Activated CD8-positive, alpha-beta T cell treated with anti-CD3 and anti-CD28 coated beads, Interleukin-2, amount 10 ng/mL, durations not matched to agents 7 days and 5 days (primary cell): ENCODE measurements at regions of chr17 and their contacts with region 1.

Region 1: DNA sequence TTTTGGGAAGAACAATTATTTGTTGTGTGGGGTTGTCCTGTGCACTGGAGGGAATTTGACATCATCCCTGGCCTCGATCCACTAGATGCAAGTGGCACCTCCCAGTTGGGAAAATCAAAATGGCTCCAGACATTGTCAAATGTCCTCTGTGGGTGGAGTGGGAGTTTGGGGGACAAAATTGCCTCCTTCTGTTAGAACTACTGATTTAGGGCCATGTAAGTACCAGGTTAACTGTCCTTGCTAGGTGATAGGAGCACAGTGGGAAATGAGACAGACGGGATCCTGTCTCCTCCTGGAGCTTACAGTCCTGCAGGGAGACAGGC is 56.8 kb downstream of the ARHGAP23 start:
- DNase-seq: no peak
- ATAC-seq: no peak
- H3K4me3 Mint-ChIP-seq: no peak overlapping the region
- H3K27ac Mint-ChIP-seq: no peak overlapping the region
- H3K4me1 Mint-ChIP-seq: peaks cover 5% of the 10 kb centered on the region
- H3K27me3 Mint-ChIP-seq: peaks cover 10% of the 10 kb centered on the region

Region 2: DNA sequence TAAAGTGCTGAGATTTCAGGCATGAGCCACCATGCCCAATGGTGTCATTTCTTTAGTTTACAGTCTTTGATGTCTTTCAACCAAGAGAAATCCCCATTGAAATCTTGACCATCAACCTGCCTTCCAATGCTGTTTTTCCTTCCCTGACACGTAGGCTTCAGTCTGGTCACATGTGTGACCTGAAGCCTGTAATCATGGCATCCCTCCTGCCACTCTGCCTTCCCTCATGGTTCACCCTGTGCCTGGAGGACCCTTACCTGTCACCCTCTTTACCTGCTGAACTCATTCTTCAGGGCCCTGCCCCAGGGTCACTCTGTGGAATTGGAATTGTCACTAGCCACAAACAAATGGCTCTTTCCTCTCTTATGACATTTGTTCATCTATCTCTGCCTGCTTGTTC is 74.9 kb before region 1 on chr17:
- CTCF ChIA-PET with region 1: no interaction called
- POLR2A ChIA-PET with region 1: no interaction called
- DNase-seq: no peak
- ATAC-seq: no peak
- H3K4me3 Mint-ChIP-seq: no peak overlapping the region
- H3K27ac Mint-ChIP-seq: no peak overlapping the region
- H3K4me1 Mint-ChIP-seq: peaks cover 7% of the 10 kb centered on the region
- H3K27me3 Mint-ChIP-seq: no peaks in the 10 kb centered on the region

Region 3: GRCh38 chr17:38421171-38421841 is 63.8 kb before region 1 on chr17:
- CTCF ChIA-PET with region 1: interaction called, 10 read pairs
- POLR2A ChIA-PET with region 1: no interaction called
- DNase-seq: no peak
- ATAC-seq: no peak
- H3K4me3 Mint-ChIP-seq: no peak overlapping the region
- H3K27ac Mint-ChIP-seq: no peak overlapping the region
- H3K4me1 Mint-ChIP-seq: peaks cover 5% of the 10 kb centered on the region
- H3K27me3 Mint-ChIP-seq: peaks cover 51% of the 10 kb centered on the region